Calu3 (cell line): ENCODE measurements at regions of chr19 and their contacts with region 1.

Region 1: GRCh38 chr19:48738557-48739399 is 1.6 kb downstream of the RASIP1 start:
- DNase-seq: peak; percentile 98
- H3K4me3 Mint-ChIP-seq: peak overlapping the region; percentile 26
- H3K27ac Mint-ChIP-seq: no peak overlapping the region
- H3K4me1 Mint-ChIP-seq: peaks cover 8% of the 10 kb centered on the region
- H3K27me3 Mint-ChIP-seq: peaks cover 22% of the 10 kb centered on the region
- CTCF ChIP-seq: peak; percentile 72

Region 2: DNA sequence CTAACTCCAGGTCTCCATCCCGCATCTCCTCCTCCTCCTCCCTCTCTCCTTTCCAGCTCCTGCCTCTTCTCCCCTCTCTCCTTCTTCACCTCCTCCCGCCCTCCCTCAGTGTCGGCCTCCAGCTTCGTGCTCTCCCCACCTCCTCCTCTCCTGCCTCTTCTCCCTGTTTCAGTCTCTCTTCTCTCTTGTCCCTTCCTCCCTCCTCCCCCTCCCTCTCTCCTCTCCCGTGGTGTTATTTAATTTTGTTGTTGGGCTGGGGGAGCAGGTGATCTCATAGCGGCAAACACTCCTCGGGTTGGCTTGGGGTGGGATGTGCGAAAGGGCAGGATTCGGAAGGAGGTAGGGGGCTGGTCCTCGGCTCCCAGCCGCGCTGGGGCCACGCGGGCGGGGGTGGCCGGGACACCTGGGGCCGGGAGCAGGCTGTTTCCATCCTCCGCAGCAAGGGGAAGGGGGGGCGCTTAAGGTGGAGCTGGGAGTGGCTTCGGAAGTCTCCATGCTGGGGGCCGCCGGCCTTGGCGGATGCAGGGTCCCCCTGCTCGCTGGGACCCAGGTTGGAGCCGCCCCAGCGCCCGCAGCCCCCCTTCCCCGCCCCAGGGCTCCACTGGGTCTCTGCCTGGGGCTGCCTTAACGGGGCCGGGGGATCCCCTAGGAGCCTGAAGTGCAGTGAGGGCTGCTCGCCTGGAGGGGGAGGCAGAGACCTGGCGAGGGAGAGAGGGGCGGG is 92.6 kb before region 1 on chr19 and contains the start of gene CA11:
- CTCF ChIA-PET with region 1: interaction called, 13 read pairs
- intact Hi-C with region 1: no loop called
- DNase-seq: peak; percentile 94
- H3K4me3 Mint-ChIP-seq: peak within 1 kb of the TSS; percentile 55
- H3K27ac Mint-ChIP-seq: no peak within 1 kb of the TSS
- H3K4me1 Mint-ChIP-seq: peaks cover 19% of the 10 kb centered on the region
- H3K27me3 Mint-ChIP-seq: peaks cover 59% of the 10 kb centered on the region
- CTCF ChIP-seq: peak; percentile 91
- total RNA-seq, gene CA11: 2.1 and 5.1 TPM in 2 replicates

Region 3: GRCh38 chr19:48674921-48675824 is 63.6 kb before region 1 on chr19:
- CTCF ChIA-PET with region 1: interaction called, 15 read pairs
- intact Hi-C with region 1: loop called (anchors 5 kb)
- DNase-seq: peak; percentile 87
- H3K4me3 Mint-ChIP-seq: no peak overlapping the region
- H3K27ac Mint-ChIP-seq: no peak overlapping the region
- H3K4me1 Mint-ChIP-seq: peaks cover 25% of the 10 kb centered on the region
- H3K27me3 Mint-ChIP-seq: no peaks in the 10 kb centered on the region
- CTCF ChIP-seq: peak; percentile 85

Region 4: DNA sequence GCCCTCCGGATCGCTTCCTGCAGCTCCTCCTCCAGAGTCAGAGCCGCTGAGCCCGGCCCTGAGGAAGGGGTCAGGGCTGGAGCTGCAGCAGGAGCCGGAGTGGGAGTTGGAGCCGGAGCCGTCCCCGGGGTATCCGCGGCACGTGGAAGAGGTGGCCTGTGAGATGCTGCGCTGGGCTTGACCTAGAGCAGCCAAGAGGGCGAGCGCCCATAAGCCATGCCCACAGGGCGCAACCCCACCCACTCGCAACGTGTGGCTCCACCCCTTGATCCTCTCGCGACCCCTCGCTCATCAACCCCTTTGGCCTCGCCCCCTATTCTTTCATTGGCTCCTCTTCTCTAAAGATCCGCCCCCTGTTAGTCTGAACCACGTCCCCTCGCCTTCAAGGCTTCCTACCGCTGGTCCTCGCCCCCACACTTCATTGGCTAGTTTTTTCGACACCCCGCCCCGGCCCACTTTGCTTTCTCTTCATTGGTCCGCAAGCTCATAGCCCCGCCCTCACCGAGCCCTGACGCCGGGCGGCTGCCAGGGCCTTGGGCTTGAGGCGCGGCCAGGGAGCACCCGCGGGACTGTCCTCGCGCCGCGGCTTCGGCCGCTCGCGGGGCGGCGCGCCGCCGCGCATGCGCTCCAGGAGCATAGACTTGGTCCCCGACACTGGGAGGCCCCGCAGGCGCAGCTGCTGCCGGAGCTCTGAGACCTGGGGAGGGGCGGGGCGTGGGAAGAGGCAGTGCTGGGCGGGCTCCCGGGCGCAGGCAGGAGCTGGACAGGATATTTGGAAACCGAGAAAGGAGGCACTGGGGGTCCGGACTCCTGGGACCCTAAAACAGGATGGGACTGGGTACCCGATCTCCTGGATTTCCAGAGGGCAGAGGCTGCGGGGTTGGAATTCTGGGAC is 24.7 kb before region 1 on chr19:
- CTCF ChIA-PET with region 1: interaction called, 10 read pairs
- intact Hi-C with region 1: no loop called
- DNase-seq: peak; percentile 100
- H3K4me3 Mint-ChIP-seq: peak overlapping the region; percentile 89
- H3K27ac Mint-ChIP-seq: peak overlapping the region; percentile 65
- H3K4me1 Mint-ChIP-seq: peaks cover 21% of the 10 kb centered on the region
- H3K27me3 Mint-ChIP-seq: peaks cover 11% of the 10 kb centered on the region
- CTCF ChIP-seq: no peak

Region 5: DNA sequence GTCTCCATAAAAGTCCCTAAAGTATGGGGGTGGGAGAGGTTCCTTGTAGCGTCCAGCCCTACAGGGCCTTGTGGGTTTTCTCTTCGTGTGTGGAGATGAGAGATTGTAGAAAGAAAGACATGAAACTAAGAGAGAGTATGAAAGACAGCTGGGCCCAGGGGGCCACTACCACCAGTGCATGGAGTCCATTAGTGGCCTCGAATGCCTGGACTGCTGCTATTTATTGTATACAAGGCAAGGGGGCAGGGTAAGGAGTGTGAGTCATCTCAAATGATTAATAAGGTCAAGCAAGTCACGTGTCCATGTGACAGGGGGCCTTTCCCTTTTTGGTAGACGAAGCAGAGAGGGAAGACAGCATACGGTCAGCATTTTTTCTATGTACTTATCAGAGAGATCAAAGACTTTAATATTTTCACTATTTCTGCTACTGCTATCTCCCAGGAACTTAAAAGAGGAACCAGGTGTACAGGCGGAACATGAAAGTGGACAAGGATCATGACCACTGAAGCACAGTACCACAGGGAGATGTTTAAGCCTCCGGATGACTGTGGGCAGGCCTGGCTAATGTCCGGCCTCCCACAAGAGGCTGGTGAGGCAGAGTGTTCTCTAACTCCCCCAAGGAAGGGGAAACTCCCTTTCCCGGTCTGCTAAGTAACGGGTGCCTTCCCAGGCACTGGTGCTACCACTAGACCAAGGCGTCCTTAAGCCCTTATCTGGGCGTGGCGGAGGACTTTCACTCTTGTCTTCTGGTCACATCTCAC is 42.0 kb after region 1 on chr19:
- CTCF ChIA-PET with region 1: interaction called, 10 read pairs
- intact Hi-C with region 1: no loop called
- DNase-seq: peak; percentile 70
- H3K4me3 Mint-ChIP-seq: no peak overlapping the region
- H3K27ac Mint-ChIP-seq: peak overlapping the region; percentile 64
- H3K4me1 Mint-ChIP-seq: peaks cover 18% of the 10 kb centered on the region
- H3K27me3 Mint-ChIP-seq: no peaks in the 10 kb centered on the region
- CTCF ChIP-seq: no peak